OCI-LY7 (cell line): ENCODE measurements at regions of chr3 and their contacts with region 1.

Region 1: DNA sequence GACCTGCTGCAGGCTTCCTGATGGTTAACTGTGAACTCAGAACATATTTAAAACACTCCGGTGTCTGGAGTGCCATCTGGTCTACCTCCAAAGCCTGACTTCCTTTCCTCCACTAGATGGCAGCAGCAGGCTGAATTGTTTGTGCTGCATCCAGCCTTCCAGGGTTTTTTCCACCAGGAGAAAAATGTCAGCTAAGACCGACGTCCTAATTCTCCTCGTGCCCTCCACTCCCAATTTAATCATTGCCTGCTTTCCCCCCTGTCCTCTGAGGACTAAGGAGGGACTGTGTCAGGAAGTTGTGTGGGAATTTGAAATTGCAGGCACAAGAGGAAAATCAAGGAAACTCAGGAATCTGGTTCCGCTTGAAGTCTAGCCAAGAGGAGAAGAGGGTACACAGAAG is 165.2 kb upstream of the UMPS start:
- DNase-seq: peak; percentile 52
- H3K4me3 ChIP-seq: no peak overlapping the region
- H3K27ac ChIP-seq: no peak overlapping the region
- H3K4me1 ChIP-seq: no peaks in the 10 kb centered on the region
- CTCF ChIP-seq: peak; percentile 91

Region 2: DNA sequence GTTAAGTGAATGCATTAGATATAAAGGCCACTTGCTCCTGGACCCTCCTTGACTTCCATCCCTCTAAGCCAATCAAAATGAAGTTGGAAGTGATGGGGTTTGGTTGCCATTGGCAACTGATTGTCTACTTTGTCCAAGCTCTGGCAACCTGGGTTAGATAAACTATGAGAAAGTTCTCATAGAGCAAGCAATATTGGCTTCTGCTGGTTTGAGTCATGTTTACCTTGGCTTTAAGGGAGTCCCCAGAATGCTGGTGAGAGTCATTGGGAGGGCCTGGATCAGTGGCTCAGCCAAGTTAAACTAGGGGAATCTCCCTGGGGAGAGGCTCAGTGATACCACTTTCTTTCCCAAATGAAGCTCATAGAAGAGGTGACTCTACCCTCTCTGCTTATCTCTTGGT is 396.8 kb before region 1 on chr3:
- CTCF ChIA-PET with region 1: no interaction called
- POLR2A ChIA-PET with region 1: no interaction called
- intact Hi-C with region 1: no loop called
- DNase-seq: no peak
- H3K4me3 ChIP-seq: no peak overlapping the region
- H3K27ac ChIP-seq: no peak overlapping the region
- H3K4me1 ChIP-seq: no peaks in the 10 kb centered on the region
- CTCF ChIP-seq: no peak

Region 3: DNA sequence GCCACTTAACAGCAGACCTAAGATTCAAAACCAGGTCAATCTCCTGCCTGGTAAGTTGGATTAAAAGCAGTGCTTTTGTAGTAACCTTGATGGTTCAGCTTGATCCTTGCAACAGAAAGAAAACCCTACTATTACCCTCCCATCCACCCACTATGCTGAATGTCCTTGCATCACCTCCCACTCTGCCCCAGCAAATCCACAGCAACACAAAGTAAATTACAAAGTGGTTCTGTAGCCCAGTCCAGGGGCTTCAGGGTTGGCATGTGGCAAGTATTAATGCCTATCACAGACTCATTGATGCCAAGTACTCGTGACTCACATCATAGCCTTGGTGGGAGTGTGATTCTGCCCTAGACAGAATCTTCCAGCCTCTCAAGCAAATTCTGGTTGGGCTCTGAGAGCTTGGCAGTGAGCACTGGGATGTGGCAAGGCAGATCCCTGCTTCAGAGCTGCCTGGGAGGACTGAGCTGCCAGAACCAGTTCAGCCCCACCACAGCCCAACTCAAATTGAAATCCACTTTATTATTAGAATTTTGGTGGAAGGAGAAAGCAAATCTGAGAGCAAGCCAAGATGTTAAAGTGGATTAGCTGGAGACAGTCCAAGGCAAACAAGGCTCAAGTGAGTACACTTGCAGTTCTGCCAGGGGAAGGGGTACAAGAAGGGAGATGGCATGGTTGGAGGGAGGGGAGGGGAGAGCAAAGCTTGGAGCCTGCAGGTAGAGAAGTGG is 60.5 kb before region 1 on chr3:
- CTCF ChIA-PET with region 1: no interaction called
- POLR2A ChIA-PET with region 1: no interaction called
- intact Hi-C with region 1: no loop called
- DNase-seq: no peak
- H3K4me3 ChIP-seq: no peak overlapping the region
- H3K27ac ChIP-seq: no peak overlapping the region
- H3K4me1 ChIP-seq: no peaks in the 10 kb centered on the region
- CTCF ChIP-seq: no peak

Region 4: DNA sequence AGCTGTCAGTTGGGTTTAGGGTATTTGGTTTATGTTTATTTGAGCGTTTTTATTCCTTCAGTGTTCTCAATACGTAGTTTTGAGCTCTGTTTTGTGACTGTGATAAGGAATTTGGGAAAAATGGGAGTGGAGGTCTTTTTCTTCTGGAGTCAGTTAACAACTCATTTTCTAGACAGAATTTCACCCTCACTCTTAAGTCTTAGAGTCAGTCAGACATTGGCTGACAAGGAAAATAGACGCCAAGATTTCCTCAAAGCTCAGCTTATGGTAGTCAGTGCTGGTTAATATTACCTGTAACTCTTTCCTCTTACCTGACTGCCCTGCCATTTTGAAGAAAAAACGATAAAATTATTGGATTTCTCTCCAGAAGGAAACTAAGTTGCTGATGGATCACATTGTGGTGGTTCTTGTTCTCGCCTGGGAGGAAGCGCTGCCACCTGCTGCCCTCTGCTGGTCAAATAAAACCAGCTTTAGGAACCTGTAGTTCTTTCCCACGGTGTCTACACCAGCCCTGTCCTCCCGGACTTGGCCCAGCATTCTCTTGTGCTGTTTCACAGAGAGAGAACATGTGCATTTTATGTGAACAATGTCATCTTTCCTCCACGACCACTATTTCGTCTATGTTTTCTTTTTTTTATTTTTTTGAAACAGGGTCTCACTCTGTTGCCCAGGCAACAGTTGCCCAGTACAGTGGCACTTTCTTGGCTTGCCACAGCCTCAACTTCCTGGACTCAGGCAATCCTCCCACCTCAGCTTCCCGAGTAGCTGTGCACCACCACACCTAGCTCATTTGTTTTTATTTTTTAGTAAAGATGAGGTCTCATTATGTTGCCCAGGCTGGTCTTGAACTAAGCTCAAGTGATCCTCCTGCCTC is 123.8 kb after region 1 on chr3:
- CTCF ChIA-PET with region 1: no interaction called
- POLR2A ChIA-PET with region 1: no interaction called
- intact Hi-C with region 1: loop called (anchors 1 kb)
- DNase-seq: peak; percentile 60
- H3K4me3 ChIP-seq: no peak overlapping the region
- H3K27ac ChIP-seq: no peak overlapping the region
- H3K4me1 ChIP-seq: no peaks in the 10 kb centered on the region
- CTCF ChIP-seq: peak; percentile 84